ENCODE measurements at regions of chr5 and their contacts with region 1.

Region 1: DNA sequence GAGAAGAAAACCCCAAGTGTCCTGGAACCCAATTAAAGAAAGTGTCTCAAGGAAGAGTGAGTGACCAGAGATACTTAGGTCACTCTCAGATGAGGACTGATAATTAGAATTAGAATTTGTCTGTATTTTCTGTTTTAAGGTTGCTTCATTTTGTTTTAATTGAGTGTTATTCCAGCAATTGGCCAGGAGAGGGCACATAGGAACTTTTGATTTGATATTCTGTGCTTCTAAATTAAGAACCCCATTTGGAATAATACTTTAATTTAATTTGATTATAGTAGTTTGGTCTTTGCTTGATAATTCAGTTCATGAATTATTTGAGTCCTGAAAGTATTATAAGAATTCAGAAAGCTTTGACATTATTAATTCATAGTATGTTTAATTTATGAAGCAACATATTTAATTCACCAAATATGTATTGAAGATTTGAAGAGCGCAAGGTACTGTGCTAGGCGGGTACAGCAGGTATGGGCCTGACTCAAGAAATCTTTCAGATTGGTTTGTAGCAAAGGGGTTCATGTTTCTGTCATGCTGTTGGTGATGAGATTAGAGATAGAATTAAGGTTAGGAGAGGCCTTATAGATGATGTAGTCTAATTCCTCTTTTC is 4.9 kb downstream of the MRPL22 start:
- DNase-seq: no peak
- ATAC-seq: no peak
- H3K4me3 ChIP-seq: no peak overlapping the region
- H3K27ac ChIP-seq: no peak overlapping the region
- H3K4me1 ChIP-seq: peaks cover 0 to 53% (median 35%) of the 10 kb centered on the region in 9 donors
- H3K27me3 ChIP-seq: no peaks in the 10 kb centered on the region
- CTCF ChIP-seq: peak; percentile 30 to 77 (median 65)

Region 2: GRCh38 chr5:155004138-155004744 is 58.4 kb after region 1 on chr5:
- intact Hi-C with region 1: loop called in 2 of 10 experiments (anchors 2 kb)
- DNase-seq: peak; percentile 4 to 23
- ATAC-seq: peak in 1 of 8 donors; percentile 48
- H3K4me3 ChIP-seq: no peak overlapping the region
- H3K27ac ChIP-seq: no peak overlapping the region
- H3K4me1 ChIP-seq: no peaks in the 10 kb centered on the region
- H3K27me3 ChIP-seq: no peaks in the 10 kb centered on the region
- CTCF ChIP-seq: peak in 7 of 9 donors; percentile 38 to 59 (median 49)

Measured in heart right ventricle (tissue), 16 donors.